ENCODE measurements at regions of chr15 and their contacts with region 1.

Region 1: GRCh38 chr15:78638658-78639314 is 2.2 kb downstream of the CHRNB4 start:
- DNase-seq: peak; percentile 75
- H3K4me3 Mint-ChIP-seq: no peak overlapping the region
- H3K27ac Mint-ChIP-seq: no peak overlapping the region
- H3K4me1 Mint-ChIP-seq: peaks cover 8% of the 10 kb centered on the region
- H3K27me3 Mint-ChIP-seq: peaks cover 18% of the 10 kb centered on the region

Region 2: GRCh38 chr15:78695854-78696253 is 57.1 kb after region 1 on chr15:
- CTCF ChIA-PET with region 1: interaction called, 3 read pairs
- intact Hi-C with region 1: loop called (anchors 2 kb)
- DNase-seq: no peak
- H3K4me3 Mint-ChIP-seq: no peak overlapping the region
- H3K27ac Mint-ChIP-seq: no peak overlapping the region
- H3K4me1 Mint-ChIP-seq: no peaks in the 10 kb centered on the region
- H3K27me3 Mint-ChIP-seq: peaks cover under 1% of the 10 kb centered on the region

Region 3: DNA sequence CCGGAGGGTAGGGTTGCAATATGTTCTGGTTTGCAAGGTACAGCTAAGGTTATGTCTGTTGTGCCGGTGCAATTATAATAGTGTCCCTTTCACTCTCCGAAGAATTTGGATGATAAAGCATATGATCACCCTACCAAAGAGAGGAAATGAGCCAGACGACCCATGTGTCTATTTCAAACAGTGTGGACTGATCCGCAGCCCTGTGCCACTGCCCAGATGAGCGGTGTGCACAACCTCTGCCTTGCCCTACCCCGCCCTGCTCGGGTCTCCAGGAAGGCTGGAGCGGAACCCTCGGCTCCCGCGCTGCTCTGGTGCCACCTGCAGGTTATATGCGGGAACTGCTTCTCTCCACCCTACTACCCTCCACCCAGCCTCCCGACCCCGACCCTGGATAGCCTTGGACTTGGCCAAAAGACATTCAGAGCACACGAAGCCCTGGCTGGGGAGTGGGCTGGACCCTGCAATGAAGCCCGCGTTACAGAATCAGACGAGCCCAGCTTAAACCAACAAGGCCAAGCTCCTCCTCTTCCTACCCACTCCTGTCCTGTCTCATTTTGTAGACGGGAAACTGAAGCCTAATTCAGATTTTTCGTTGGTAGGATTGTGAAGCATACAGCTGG is 70.6 kb after region 1 on chr15:
- CTCF ChIA-PET with region 1: interaction called, 102 read pairs
- intact Hi-C with region 1: loop called (anchors 1 kb)
- DNase-seq: peak; percentile 79
- H3K4me3 Mint-ChIP-seq: no peak overlapping the region
- H3K27ac Mint-ChIP-seq: no peak overlapping the region
- H3K4me1 Mint-ChIP-seq: peaks cover 4% of the 10 kb centered on the region
- H3K27me3 Mint-ChIP-seq: peaks cover 31% of the 10 kb centered on the region

Region 4: GRCh38 chr15:78739996-78740903 is 101.5 kb after region 1 on chr15:
- CTCF ChIA-PET with region 1: interaction called, 25 read pairs
- intact Hi-C with region 1: no loop called
- DNase-seq: peak; percentile 79
- H3K4me3 Mint-ChIP-seq: no peak overlapping the region
- H3K27ac Mint-ChIP-seq: no peak overlapping the region
- H3K4me1 Mint-ChIP-seq: peaks cover 2% of the 10 kb centered on the region
- H3K27me3 Mint-ChIP-seq: peaks cover 2% of the 10 kb centered on the region

Region 5: GRCh38 chr15:78750566-78750965 is 111.8 kb after region 1 on chr15:
- CTCF ChIA-PET with region 1: interaction called, 3 read pairs
- intact Hi-C with region 1: loop called (anchors 5 kb)
- DNase-seq: peak; percentile 1
- H3K4me3 Mint-ChIP-seq: peak overlapping the region; percentile 51
- H3K27ac Mint-ChIP-seq: no peak overlapping the region
- H3K4me1 Mint-ChIP-seq: peaks cover 5% of the 10 kb centered on the region
- H3K27me3 Mint-ChIP-seq: no peaks in the 10 kb centered on the region

Region 6: GRCh38 chr15:79310983-79311900 is 672.5 kb after region 1 on chr15 and contains the start of gene TMED3:
- CTCF ChIA-PET with region 1: no interaction called
- intact Hi-C with region 1: no loop called
- DNase-seq: peak; percentile 85
- H3K4me3 Mint-ChIP-seq: peak within 1 kb of the TSS; percentile 85
- H3K27ac Mint-ChIP-seq: no peak within 1 kb of the TSS
- H3K4me1 Mint-ChIP-seq: peaks cover 35% of the 10 kb centered on the region
- H3K27me3 Mint-ChIP-seq: peaks cover 14% of the 10 kb centered on the region
- total RNA-seq, gene TMED3: 37.6 to 37.9 TPM

Measured in activated naive CD4-positive, alpha-beta T cell treated with anti-CD3 and anti-CD28 coated beads for 36 hours (primary cell).